BJ (cell line): ENCODE measurements at regions of chr9 and their contacts with region 1.

Region 1: GRCh38 chr9:94656200-94656599 is 16.9 kb upstream of the FBP1 start:
- DNase-seq: no peak
- H3K4me3 ChIP-seq: no peak overlapping the region
- H3K27me3 ChIP-seq: no peaks in the 10 kb centered on the region; the same call in 1 of the 2 replicates
- CTCF ChIP-seq: no peak

Region 2: GRCh38 chr9:94668418-94668932 is 12.3 kb after region 1 on chr9:
- CTCF ChIA-PET with region 1: interaction called, 24 read pairs
- POLR2A ChIA-PET with region 1: no interaction called
- DNase-seq: no peak
- H3K4me3 ChIP-seq: no peak overlapping the region
- H3K27me3 ChIP-seq: no peaks in the 10 kb centered on the region
- CTCF ChIP-seq: no peak

Region 3: GRCh38 chr9:94697972-94698581 is 41.9 kb after region 1 on chr9:
- CTCF ChIA-PET with region 1: no interaction called
- POLR2A ChIA-PET with region 1: no interaction called
- DNase-seq: no peak
- H3K4me3 ChIP-seq: no peak overlapping the region
- H3K27me3 ChIP-seq: no peaks in the 10 kb centered on the region
- CTCF ChIP-seq: no peak